Right cardiac atrium (tissue), 5 donors: ENCODE measurements at regions of chr14 and their contacts with region 1.

Region 1: GRCh38 chr14:103292426-103293374 is 41.3 kb upstream of the EIF5 start:
- DNase-seq: peak; percentile 76 to 91 (median 90)
- ATAC-seq: peak; percentile 82 to 88
- H3K4me3 ChIP-seq: no peak overlapping the region
- H3K27ac ChIP-seq: no peak overlapping the region
- H3K4me1 ChIP-seq: no peaks in the 10 kb centered on the region
- H3K27me3 ChIP-seq: no peaks in the 10 kb centered on the region

Region 2: GRCh38 chr14:103078093-103078749 is 214.5 kb before region 1 on chr14:
- intact Hi-C with region 1: loop called in 1 of 4 experiments (anchors 5 kb)
- DNase-seq: peak; percentile 84 to 93 (median 89)
- ATAC-seq: no peak
- H3K4me3 ChIP-seq: no peak overlapping the region
- H3K27ac ChIP-seq: no peak overlapping the region
- H3K4me1 ChIP-seq: peaks cover 4% of the 10 kb centered on the region
- H3K27me3 ChIP-seq: no peaks in the 10 kb centered on the region

Region 3: DNA sequence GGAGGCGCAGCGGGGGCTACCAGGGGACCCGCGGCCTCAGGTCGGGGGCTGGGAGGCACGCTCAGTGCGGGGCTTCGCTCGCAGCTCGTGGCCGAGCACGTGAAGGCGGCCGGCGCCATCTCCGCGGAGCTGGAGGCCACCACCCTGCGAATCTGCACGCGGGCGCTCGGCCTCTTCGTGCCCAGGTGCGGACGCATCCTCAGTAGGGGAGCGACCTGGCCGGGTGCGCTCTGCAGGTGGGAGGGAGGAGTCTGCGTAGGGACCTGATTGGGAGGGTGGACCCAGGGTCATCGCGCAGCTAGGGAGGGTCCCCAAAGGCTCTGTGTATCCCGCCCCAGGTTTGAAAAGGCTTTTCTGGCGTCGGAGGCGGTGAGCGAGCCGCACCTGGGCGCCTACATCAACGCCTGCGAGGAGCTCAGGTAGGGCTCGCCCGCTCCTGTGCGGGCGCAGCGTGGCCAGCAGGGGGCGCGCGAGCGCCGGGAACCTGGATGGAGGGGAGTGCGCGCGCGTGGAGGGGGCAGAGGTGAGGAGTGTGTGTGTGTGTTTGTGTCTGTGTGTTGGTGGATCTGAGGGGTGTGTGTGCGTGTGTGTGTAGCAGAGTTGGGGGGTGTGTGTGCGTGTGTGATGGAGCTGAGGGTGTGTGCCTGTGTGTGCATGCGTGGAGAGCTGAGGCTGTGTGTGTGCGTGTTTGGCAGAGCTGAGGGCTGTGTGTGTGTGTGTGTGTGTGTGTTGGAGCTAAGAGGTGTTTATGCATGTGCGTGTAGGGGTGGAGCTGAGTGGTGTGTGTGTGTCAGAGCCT is 187.8 kb before region 1 on chr14:
- intact Hi-C with region 1: loop called in 3 of 4 experiments (anchors 5 to 10 kb)
- DNase-seq: peak; percentile 66 to 89 (median 88)
- ATAC-seq: peak; percentile 74 to 81
- H3K4me3 ChIP-seq: no peak overlapping the region
- H3K27ac ChIP-seq: no peak overlapping the region
- H3K4me1 ChIP-seq: no peaks in the 10 kb centered on the region
- H3K27me3 ChIP-seq: no peaks in the 10 kb centered on the region

Region 4: DNA sequence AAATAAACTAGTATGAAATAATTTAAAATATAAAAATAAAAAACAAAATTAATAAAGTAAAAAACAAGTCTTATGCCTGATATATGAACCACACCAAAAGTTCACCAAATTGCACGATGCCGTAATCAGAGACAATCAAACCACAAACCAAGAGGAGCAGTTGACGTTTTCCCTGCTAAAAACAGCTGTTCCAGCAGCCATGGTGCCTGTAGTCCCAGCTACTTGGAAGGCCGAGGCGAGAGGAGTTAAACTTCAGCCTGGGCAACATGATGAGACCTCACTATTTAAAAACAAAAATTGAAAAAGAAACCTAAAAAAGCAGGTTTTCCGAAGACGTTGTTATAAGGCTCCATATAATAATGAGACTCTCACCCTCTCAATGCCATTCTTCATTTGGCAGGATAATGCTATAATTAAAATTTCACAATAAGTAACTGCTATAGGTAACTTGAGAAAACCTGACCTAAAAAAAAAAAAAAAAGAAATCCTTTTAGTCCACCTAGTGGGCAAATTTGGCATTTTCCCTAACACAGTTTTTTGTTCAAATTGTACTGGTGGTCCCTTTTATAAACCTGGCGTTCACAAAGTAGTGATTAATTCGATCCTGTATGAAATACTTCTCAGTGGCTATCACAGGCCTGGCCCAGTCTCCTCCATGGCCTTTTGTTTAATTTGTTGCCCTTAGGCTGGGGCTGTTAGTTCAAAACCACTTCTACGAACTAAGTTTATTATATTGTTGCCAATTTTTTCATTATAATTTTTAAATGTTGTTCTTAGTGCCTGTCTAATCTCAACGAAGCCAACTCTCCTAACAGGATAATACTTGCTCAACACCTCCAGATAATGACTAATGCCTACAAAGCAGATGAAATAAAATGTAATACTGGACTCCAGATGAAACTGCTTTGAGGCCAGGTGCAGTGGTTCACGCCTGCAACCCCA is 107.4 kb before region 1 on chr14:
- intact Hi-C with region 1: loop called (anchors 2 to 10 kb)
- DNase-seq: no peak
- ATAC-seq: no peak
- H3K4me3 ChIP-seq: no peak overlapping the region
- H3K27ac ChIP-seq: no peak overlapping the region
- H3K4me1 ChIP-seq: no peaks in the 10 kb centered on the region
- H3K27me3 ChIP-seq: no peaks in the 10 kb centered on the region